Posterior cingulate gyrus (tissue), 11 donors: ENCODE measurements at regions of chr19 and their contacts with region 1.

Region 1: DNA sequence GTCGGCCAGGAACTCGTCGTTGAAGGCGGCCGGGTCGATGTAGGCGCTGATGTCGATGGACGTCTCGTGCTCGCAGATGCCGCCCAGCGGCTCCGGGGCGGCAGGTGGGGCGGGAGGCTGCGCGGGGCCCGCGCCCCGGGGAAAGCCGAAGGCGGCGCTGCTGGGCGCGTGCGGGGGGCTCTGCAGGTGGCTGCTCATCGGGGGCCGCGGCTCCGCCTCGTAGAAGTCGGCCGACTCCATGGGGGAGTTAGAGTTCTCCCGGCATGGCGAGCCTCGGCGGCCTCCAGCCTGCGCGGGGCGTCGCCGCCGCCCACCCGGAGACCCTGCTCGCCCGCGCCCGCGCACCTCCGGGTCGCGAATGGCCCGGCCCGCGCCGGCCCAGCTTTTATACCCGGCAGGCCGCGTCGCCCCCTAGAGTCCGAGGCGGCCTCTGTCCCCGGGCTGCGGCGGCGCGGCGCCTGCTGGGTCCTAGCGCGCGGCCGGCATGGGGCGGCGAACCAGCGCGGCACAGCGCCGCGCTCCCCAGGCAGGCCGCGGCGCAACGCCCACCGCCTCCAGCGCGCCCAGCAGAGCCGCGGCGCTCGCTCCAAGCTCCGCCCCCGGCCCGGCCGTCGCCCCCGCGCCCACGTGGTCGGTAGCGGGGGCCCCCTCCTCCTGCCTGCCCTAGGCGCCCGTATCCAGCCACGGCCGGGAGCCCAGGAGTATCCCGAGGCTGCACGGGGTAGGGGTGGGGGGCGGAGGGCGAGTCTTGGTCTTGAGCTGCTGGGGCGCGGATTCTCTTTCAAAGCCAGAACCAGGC is at the start of gene CEBPA:
- DNase-seq: peak in 9 of 10 donors; percentile 51 to 96 (median 73)

Region 2: GRCh38 chr19:33373701-33374421 is 71.5 kb after region 1 on chr19 and contains the start of gene CEBPG:
- intact Hi-C with region 1: loop called (anchors 2 kb)
- DNase-seq: peak in 3 of 10 donors; percentile 27 to 87 (median 78)